HEK293T (cell line): ENCODE measurements at regions of chr17 and their contacts with region 1.

Region 1: GRCh38 chr17:30093463-30094147 is 23.0 kb upstream of the NSRP1 start:
- DNase-seq: peak; percentile 71

Region 2: GRCh38 chr17:29807520-29808351 is 285.9 kb before region 1 on chr17:
- CTCF ChIA-PET with region 1: interaction called, 18 read pairs
- POLR2A ChIA-PET with region 1: no interaction called
- DNase-seq: peak; percentile 46

Region 3: GRCh38 chr17:30021708-30022317 is 71.8 kb before region 1 on chr17:
- CTCF ChIA-PET with region 1: interaction called, 23 read pairs
- POLR2A ChIA-PET with region 1: no interaction called
- DNase-seq: peak; percentile 26

Region 4: DNA sequence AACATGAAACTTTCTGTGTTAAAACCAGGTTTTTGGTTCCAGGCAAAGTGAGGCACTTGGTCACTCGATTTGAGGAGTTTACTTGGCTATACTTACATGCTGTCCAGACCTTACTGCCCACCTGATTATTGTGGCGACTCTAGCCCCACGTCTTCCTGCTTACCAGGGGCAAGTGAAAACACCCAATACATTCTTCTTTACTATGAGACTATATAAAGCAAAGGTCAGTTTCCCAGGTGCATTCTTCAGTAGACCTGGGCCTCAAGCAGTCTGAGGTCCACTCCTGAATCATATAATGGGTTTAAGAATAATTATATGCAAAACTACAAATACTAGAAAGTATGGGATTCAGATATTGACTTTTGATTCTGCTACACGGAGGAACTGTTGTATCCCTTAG is 65.9 kb before region 1 on chr17:
- CTCF ChIA-PET with region 1: interaction called, 20 read pairs
- POLR2A ChIA-PET with region 1: no interaction called
- DNase-seq: no peak

Region 5: DNA sequence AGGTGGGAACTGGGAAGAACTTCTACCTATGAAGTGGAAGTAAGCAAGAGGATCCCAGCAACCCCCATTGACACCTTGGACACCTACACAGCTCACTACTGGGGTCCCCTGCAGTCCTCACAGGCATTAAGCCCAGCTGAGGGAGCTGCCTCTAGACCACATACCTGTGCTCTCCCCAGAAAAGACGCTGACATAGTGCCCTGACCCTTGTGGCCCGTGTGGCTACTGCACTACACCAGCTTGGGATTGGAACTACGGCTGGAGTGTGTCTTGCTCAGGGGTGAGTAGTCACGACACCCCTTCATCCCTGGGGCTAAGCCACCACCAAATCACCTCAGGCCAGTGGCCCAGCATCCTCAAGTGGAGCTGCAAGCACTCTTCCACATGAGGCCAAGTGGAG is 31.2 kb before region 1 on chr17:
- CTCF ChIA-PET with region 1: interaction called, 10 read pairs
- POLR2A ChIA-PET with region 1: no interaction called
- DNase-seq: no peak

Region 6: DNA sequence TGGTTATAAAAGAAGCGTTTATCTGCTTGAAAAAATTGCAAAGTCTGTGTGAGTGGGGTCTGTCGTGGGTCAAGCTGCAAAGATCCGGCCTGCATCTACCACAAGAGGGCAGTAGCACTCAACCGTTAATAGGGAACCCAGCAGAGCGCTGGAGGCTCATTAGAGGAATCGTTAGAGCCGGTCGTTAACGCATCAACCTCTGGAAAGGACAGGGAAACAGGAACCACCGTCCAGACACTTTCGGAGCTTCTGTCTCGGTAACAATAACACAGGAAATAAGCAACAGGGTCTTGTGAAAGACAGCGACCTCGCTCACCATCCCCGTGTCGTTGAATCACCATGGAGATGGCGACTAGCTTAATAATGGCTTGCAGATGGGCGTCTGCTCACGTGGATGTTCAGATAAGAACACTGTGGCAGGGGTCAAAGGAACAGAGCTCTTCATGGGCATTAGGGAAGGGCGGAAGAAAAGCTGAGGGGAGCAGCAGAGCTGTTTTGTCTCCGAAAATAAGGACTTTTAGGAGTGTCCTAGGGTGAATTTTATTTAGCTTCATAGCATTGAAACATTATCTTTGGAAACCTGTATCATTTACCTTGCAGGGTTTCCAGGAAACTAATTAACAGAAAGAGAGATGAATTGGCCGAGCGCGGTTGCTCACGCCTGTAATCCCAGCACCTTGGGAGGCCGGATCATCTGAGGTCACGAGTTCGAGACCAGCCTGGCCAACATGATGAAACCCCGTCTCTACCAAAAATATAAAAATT is 11.2 kb after region 1 on chr17:
- CTCF ChIA-PET with region 1: interaction called, 50 read pairs
- POLR2A ChIA-PET with region 1: no interaction called
- DNase-seq: peak; percentile 69